ENCODE measurements at regions of chr20 and their contacts with region 1.

Region 1: DNA sequence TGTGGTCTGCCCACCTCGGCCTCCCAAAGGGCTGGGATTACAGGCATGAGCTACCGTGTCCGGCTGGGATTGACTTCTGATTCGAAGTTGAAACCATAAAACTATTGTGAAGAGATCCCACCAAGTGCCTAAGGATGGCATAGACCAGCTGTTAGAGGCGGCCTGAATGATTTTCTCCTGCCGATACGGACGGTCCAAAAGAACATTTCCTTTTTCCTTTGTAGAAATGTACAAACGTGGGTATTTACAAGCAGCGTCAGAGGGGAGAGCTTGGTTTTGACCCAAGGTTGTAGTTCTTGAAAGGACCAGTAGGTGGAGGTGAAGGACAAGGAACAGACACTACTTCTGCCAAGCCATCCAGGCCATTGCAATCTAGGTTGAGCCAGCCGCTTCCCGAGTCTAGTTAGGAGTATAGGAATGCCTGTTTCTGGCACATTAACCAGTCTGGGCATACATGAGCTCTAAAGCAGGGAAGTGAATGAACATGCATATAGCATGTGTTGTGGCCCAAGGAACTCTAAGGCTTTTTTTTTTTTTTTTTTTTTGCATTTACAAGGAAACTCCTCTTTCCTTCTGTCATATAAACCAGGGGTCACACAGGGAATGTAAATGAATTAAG is 29.1 kb downstream of the MOCS3 start:
- DNase-seq: peak; percentile 69
- ATAC-seq: peak; percentile 70
- H3K4me3 Mint-ChIP-seq: no peak overlapping the region; the same call in 1 of the 2 replicates
- H3K27ac Mint-ChIP-seq: 0 out of 2 replicates have a peak overlapping the region, but pooled peaks have one; percentile 26
- H3K4me1 Mint-ChIP-seq: peaks cover 39% of the 10 kb centered on the region
- H3K27me3 Mint-ChIP-seq: no peaks in the 10 kb centered on the region; the same call in 1 of the 2 replicates
- CTCF ChIP-seq: peak; percentile 83

Region 2: DNA sequence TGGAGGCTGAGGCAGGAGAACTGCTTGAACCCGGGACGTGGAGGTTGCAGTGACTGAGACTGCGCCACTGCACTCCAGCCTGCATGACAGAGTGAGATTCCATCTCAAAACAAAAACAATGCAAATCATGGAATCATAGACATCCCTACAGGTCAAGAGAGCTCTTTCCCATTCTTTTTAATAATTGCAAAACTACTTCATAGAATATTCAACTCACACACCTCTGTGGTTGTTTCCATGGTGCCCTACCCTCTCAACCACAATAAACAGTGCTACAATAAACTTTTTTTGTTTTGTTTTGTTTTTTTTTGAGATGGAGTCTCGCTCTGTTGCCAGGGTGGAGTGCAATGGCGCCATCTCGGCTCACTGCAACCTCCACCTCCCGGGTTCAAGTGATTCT is 44.6 kb before region 1 on chr20:
- CTCF ChIA-PET with region 1: no interaction called
- POLR2A ChIA-PET with region 1: no interaction called
- DNase-seq: no peak
- ATAC-seq: no peak
- H3K4me3 Mint-ChIP-seq: no peak overlapping the region
- H3K27ac Mint-ChIP-seq: no peak overlapping the region
- H3K4me1 Mint-ChIP-seq: no peaks in the 10 kb centered on the region
- H3K27me3 Mint-ChIP-seq: no peaks in the 10 kb centered on the region
- CTCF ChIP-seq: no peak

Region 3: DNA sequence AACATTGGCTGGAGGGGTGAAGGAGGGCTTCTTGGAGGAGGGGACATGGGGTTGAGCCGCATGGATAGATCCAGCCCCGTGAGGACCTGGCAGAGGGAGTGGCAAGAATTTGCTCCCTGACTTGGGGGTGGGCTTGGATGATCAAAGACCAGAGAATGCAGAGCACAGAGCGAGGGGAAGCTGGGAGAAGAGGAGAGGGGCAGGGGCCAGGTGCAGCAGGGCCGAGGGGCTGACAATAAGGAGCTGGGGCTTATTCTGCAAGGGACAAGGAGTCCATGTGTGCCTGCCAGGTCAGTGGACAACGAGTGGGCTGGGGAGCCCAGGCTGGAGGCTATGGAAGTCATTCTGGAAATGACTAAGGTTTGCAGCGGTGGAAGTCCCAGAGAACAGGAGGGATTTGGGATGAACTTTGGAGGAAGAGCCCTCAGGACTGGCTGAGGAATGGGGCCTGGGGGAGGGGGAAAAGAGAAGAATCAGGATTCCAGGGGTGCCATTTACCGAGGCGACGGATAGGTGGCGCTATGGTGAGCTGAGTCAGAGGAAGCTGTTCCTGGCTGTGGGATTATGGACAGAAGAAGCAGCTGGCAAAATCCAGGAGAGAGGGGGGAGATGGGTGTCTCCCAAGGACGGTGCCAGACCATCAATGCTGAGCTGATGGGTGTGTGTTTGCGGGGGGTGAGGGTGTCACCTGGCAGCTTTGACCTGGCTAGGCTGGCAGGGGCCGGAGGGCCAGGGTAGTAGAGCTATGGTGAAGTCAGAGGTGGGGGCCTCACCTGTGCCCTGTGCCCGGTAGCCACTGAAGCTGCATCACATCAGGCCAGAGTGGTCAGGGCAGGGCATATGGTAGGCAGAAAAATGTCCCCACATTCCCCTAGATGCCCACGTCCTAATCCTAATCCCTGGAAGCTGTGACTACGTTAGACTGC is 27.4 kb after region 1 on chr20:
- CTCF ChIA-PET with region 1: interaction called, 101 read pairs
- POLR2A ChIA-PET with region 1: interaction called, 4 read pairs
- DNase-seq: peak; percentile 89
- ATAC-seq: peak; percentile 87
- H3K4me3 Mint-ChIP-seq: no peak overlapping the region
- H3K27ac Mint-ChIP-seq: no peak overlapping the region
- H3K4me1 Mint-ChIP-seq: peaks cover 29% of the 10 kb centered on the region
- H3K27me3 Mint-ChIP-seq: no peaks in the 10 kb centered on the region
- CTCF ChIP-seq: peak; percentile 71

Region 4: GRCh38 chr20:51164731-51165130 is 177.0 kb after region 1 on chr20:
- CTCF ChIA-PET with region 1: interaction called, 11 read pairs
- POLR2A ChIA-PET with region 1: no interaction called
- DNase-seq: no peak
- ATAC-seq: no peak
- H3K4me3 Mint-ChIP-seq: no peak overlapping the region
- H3K27ac Mint-ChIP-seq: no peak overlapping the region
- H3K4me1 Mint-ChIP-seq: peaks cover 5% of the 10 kb centered on the region
- H3K27me3 Mint-ChIP-seq: peaks cover 31% of the 10 kb centered on the region
- CTCF ChIP-seq: no peak

Region 5: DNA sequence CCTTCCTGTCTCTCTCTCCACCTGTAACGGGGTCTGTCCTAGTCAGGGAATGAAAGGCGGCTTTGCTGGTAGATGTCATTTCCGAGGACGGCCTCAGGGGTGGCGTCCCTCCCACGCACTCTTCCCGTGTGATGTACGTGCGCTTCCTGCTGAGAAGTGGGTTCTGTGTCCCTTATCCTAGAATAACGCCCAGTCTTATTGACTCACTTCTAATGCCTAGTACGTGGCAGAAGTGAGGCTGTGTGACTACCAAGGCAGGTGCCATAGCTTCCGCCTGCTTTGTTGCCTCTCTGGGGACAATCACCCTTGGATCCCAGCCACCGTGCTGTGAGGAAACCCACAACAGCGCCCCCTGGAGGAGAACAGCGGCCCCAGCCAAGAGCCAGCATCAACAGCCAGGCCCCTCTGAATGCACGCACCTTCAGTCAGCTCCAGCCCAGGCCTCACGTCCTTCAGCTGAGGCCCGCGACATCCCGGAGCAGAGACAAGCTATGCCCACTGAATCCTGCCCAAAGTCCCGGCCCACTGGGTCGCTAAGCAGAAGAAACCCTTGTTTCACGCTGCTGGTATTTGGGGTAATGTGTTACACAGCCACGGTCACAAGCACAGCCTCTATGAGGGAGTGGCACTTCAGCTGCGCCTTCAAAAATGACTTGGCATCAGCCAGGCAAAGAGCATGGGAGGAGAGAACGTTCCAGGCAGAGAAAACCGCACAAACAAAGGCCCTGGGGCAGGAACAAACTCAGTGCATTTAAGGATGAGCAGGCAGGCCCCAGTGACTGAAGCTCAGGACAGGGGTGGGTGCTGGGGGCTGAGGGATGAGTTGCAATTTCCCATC is 330.6 kb after region 1 on chr20:
- CTCF ChIA-PET with region 1: interaction called, 211 read pairs
- POLR2A ChIA-PET with region 1: interaction called, 5 read pairs
- DNase-seq: peak; percentile 92
- ATAC-seq: peak; percentile 95
- H3K4me3 Mint-ChIP-seq: no peak overlapping the region
- H3K27ac Mint-ChIP-seq: peak overlapping the region; percentile 47; the same call in 1 of the 2 replicates
- H3K4me1 Mint-ChIP-seq: peaks cover 38% of the 10 kb centered on the region
- H3K27me3 Mint-ChIP-seq: peaks cover 24% of the 10 kb centered on the region
- CTCF ChIP-seq: peak; percentile 96

Region 6: GRCh38 chr20:51360451-51361221 is 372.9 kb after region 1 on chr20:
- CTCF ChIA-PET with region 1: interaction called, 11 read pairs
- POLR2A ChIA-PET with region 1: no interaction called
- DNase-seq: no peak
- ATAC-seq: no peak
- H3K4me3 Mint-ChIP-seq: no peak overlapping the region
- H3K27ac Mint-ChIP-seq: no peak overlapping the region
- H3K4me1 Mint-ChIP-seq: no peaks in the 10 kb centered on the region
- H3K27me3 Mint-ChIP-seq: peaks cover 6% of the 10 kb centered on the region
- CTCF ChIP-seq: no peak

Region 7: DNA sequence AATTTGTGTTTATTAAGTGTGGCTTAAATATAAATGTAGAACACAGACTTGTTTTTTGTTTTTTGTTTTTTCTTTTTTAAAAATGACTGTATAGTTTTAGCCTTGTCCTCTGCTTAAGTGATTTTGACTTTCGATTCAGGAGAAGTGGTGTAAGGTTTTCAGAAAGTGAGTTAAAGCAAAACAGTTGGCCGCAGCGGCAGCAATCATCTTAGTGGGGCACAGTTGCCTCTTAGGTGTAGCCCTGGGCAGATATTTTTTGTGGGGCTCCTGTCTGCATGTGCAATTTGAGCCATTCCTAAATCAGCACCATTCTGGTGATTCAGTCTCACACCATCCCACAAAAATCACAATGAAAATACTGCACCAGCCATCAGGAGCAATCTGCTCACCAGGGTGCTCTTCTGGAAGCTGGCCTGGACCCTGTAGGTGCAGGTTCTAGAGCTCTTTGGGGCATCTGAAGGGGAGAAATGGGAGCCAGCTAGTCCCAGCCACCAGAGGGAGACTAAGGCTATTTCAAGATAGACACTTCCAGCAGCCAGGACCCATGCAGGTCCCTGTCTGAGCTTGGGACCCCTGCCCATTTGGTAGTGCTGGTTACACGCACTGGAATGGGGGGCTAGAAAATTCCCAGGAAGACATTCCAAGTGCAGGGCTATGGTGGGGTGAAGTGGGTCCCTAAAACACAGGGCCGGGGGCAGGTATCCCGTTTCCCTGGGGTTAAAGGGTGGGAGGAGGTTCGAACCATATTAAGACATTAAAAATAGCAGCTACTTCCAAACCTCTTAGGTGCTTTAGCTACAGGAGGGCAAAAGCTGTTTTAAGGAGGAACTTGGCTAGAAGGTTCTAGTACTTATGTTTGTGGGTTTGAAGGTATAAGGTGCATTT is 398.2 kb after region 1 on chr20:
- CTCF ChIA-PET with region 1: interaction called, 28 read pairs
- POLR2A ChIA-PET with region 1: no interaction called
- DNase-seq: peak; percentile 53
- ATAC-seq: peak; percentile 58
- H3K4me3 Mint-ChIP-seq: no peak overlapping the region
- H3K27ac Mint-ChIP-seq: no peak overlapping the region
- H3K4me1 Mint-ChIP-seq: peaks cover 56% of the 10 kb centered on the region
- H3K27me3 Mint-ChIP-seq: 0 out of 2 replicates have a peak, but pooled peaks cover 2% of the 10 kb centered on the region
- CTCF ChIP-seq: peak; percentile 46; the same call in 1 of the 2 replicates

Region 8: GRCh38 chr20:51624157-51624731 is 636.5 kb after region 1 on chr20:
- CTCF ChIA-PET with region 1: interaction called, 20 read pairs
- POLR2A ChIA-PET with region 1: no interaction called
- DNase-seq: peak; percentile 84
- ATAC-seq: peak; percentile 92
- H3K4me3 Mint-ChIP-seq: no peak overlapping the region
- H3K27ac Mint-ChIP-seq: peak overlapping the region; percentile 84; the same call in 1 of the 2 replicates
- H3K4me1 Mint-ChIP-seq: peaks cover 9% of the 10 kb centered on the region
- H3K27me3 Mint-ChIP-seq: no peaks in the 10 kb centered on the region
- CTCF ChIP-seq: peak; percentile 76

Measured in WTC11 (cell line).